Motor neuron (in vitro differentiated cells): ENCODE measurements at regions of chr1 and their contacts with region 1.

Region 1: DNA sequence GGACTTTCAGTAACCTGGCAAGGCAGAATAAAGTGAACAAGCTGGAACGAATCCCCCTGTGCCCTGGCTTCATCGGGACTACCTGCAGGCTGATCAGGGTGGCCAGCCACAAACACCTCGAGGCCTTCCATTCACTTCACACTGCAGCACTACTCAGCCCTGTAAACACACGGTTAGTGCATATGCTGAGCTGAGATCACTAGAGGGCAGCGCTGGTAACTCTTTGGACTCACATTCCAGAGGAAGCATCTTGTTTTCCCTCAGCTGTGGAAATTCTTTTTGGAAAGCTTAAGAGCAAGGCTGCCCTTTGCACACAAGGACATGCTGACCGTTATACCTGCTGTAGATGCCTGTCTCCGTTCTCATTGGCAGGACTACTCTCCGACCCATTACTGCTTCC is 32.1 kb downstream of the PCSK9 start:
- ATAC-seq: peak; percentile 58 to 86 (median 72)
- H3K4me3 ChIP-seq: no peak overlapping the region
- H3K27ac ChIP-seq: no peak overlapping the region
- H3K4me1 ChIP-seq: no peaks in the 10 kb centered on the region

Region 2: DNA sequence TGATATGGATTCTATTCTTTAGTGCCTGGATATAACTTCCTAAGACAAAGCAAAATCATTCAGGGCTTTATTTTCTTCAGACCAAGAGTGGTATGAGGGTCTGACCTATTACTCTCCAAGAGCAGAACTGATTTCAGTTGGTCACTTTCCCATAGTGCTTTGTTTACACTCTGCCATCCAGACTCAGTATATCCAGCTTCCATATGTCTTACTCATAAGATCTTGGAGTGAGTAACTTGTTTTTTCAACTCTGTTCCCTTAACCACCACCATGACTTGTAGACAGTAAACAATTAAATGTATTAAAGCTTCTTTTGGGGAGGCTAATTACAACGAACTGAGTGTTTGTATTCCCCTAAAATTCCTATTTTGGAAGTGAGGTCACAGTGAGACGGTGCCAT is 60.3 kb after region 1 on chr1:
- in situ Hi-C with region 1: loop called in 1 of 9 experiments (anchors 10 kb)
- ATAC-seq: no peak
- H3K4me3 ChIP-seq: no peak overlapping the region
- H3K27ac ChIP-seq: no peak overlapping the region
- H3K4me1 ChIP-seq: no peaks in the 10 kb centered on the region